ENCODE measurements at regions of chr2 and their contacts with region 1.

Region 1: GRCh38 chr2:170361090-170361936 is 183.4 kb downstream of the MYO3B start:
- DNase-seq: peak; percentile 77
- H3K4me3 Mint-ChIP-seq: no peak overlapping the region
- H3K27ac Mint-ChIP-seq: no peak overlapping the region
- H3K4me1 Mint-ChIP-seq: peaks cover 28% of the 10 kb centered on the region
- H3K27me3 Mint-ChIP-seq: peaks cover 6% of the 10 kb centered on the region

Region 2: DNA sequence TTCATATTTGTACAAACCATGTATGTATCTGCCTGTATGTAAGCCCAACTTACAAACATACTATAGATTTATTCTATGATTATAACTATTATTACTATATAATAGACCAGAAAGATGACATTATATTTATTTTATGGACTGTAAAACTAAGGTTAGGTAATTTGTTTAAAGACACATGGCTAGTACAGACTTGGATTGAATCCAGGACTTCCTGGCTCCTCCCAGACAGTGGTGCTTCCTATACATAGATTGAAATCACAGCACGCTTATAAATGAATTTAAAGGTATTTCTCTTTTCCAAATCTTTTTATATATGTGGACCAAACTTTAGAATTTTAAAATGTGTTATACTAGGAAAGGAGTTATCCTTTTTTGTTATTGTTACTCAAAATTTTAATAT is 335.0 kb before region 1 on chr2:
- CTCF ChIA-PET with region 1: no interaction called
- intact Hi-C with region 1: no loop called
- DNase-seq: no peak
- H3K4me3 Mint-ChIP-seq: no peak overlapping the region
- H3K27ac Mint-ChIP-seq: no peak overlapping the region
- H3K4me1 Mint-ChIP-seq: no peaks in the 10 kb centered on the region
- H3K27me3 Mint-ChIP-seq: no peaks in the 10 kb centered on the region

Region 3: DNA sequence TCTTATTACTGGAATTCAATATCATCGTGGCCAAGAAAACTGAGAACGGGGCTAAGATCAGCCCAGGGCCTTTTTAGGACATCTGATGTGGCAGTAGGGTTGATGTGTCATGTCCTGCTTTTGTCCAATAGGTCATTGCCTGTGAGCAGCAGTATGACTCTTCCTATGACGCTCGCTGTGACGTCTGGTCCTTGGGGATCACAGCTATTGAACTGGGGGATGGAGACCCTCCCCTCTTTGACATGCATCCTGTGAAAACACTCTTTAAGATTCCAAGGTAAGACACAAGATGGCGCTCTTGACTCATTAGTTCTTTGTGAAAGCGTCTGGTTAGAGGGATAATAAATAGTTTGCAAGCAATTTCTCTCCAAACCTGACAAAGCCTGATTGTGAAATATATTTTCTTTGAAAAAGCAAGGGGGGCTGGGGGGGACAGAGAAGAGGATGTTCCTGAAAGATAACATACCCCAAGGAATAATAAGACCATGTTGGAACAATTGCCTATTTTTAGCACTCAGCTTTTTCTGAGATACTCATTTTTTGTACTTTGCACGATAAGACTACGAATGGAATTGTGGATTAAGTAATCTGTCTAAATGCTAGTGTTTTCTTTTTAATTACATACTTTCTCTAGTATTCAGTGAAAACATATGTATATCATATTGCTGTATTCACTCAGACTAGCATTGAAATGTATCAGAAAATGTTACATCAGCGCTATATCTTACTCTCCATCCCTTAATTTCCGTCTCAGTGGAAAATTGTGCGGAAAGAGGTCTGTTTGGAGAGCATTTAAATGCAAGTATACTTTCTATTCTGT is 125.2 kb before region 1 on chr2:
- CTCF ChIA-PET with region 1: no interaction called
- intact Hi-C with region 1: loop called (anchors 1 kb)
- DNase-seq: peak; percentile 31
- H3K4me3 Mint-ChIP-seq: no peak overlapping the region
- H3K27ac Mint-ChIP-seq: no peak overlapping the region
- H3K4me1 Mint-ChIP-seq: no peaks in the 10 kb centered on the region
- H3K27me3 Mint-ChIP-seq: peaks cover 13% of the 10 kb centered on the region

Region 4: DNA sequence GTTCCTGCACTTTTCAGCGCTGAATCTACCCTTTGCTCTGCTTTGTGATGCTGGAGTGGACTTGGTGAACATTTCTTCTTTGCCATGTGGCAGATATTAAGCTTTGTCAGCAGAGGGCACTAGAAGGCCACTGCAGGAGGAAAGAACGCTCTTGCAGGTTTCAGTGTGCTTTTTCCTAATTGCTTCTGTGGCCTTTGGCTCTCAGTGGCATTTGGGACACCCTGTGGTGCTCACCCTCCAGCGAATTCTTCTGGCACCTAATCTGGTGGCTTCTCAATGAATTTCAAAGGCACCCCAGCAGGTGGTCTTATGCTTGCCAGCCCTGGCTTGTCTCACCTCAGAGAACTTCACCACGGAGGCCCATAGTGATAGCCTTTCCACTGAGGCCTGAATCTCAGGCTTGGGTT is 36.7 kb before region 1 on chr2:
- CTCF ChIA-PET with region 1: interaction called, 13 read pairs
- intact Hi-C with region 1: loop called (anchors 2 kb)
- DNase-seq: peak; percentile 53
- H3K4me3 Mint-ChIP-seq: no peak overlapping the region
- H3K27ac Mint-ChIP-seq: no peak overlapping the region
- H3K4me1 Mint-ChIP-seq: no peaks in the 10 kb centered on the region
- H3K27me3 Mint-ChIP-seq: no peaks in the 10 kb centered on the region

Region 5: DNA sequence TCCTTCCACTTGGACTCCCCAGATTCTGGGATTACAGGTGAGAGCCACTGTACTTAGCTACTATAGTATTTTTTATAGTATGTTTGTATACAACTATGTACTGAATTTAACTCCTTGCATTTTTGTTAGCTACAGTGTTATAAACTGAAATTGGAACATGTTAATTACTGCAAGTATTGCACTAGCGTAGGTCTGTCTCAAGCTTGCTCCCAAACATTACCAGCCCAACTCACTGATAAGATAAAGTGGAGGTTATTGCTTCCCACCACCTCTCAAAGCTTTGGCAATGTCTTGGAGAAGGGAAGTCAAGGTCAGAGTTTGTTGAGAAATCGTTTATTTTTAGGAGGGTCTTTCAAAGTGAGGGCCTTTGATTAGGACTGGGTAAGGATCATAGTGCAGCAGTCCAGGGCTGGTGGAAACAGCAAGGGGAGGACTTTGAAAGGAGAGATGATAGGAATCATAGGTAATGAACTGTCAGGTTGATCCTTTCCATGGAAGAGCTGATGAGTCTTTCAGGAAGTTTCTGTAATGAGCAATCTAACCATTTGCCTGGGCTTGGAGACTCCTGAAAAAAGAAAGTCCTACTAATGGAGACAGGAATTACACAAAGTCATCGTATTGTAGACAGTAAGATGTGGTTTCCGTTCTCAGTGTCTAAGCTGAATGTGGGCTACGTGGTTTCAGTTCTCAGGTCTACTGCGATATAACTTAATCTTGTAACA is 73.7 kb after region 1 on chr2:
- CTCF ChIA-PET with region 1: no interaction called
- intact Hi-C with region 1: no loop called
- DNase-seq: peak; percentile 12
- H3K4me3 Mint-ChIP-seq: no peak overlapping the region
- H3K27ac Mint-ChIP-seq: no peak overlapping the region
- H3K4me1 Mint-ChIP-seq: peaks cover 20% of the 10 kb centered on the region
- H3K27me3 Mint-ChIP-seq: peaks cover 10% of the 10 kb centered on the region

Region 6: DNA sequence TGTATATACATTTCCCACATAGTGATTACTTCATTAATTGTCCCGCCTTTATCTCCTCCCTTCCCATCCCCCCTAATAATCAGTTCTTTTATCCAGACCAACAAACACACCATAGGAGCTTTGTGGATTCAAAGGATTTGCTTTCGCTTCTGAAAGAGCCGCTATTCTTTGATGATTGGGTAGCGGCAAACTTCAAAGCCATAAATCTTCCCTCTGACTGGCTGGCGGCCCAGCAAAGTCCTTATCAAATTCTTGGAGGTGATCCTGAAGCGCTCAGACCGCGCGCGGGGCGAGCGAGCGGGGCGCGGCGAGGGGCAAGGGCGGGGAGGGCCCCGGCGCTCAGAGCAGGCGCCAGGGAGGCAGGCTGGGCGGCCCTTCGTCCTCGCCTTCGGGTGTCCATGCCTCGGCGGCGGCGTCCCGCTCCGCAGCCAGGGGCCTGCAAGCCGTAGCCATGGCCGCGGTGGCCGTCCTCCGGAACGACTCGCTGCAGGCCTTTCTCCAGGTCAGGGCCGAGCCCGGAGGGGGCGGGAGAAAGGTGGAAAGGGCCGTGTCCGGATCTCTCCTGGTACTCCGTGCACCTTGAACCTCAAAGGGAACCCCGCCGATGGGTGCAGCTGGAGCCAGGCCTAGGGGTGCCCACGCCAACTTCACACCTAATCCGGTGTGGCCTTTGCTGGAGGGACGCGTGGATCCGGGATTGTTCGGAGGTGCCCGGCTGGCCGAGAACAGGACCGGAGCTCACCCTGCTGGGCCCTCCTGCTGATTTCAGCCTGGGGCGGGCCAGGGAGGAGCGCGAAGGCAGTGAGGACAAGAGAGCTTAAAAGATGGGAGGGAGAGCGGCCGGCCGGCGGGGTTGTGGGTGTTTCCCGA is 354.0 kb after region 1 on chr2 and contains the start of gene SP5:
- CTCF ChIA-PET with region 1: interaction called, 3 read pairs
- intact Hi-C with region 1: loop called (anchors 5 kb)
- DNase-seq: no peak
- H3K4me3 Mint-ChIP-seq: peak within 1 kb of the TSS; percentile 76
- H3K27ac Mint-ChIP-seq: no peak within 1 kb of the TSS
- H3K4me1 Mint-ChIP-seq: peaks cover 33% of the 10 kb centered on the region
- H3K27me3 Mint-ChIP-seq: peaks cover 67% of the 10 kb centered on the region
- total RNA-seq, gene SP5: not detected

Region 7: DNA sequence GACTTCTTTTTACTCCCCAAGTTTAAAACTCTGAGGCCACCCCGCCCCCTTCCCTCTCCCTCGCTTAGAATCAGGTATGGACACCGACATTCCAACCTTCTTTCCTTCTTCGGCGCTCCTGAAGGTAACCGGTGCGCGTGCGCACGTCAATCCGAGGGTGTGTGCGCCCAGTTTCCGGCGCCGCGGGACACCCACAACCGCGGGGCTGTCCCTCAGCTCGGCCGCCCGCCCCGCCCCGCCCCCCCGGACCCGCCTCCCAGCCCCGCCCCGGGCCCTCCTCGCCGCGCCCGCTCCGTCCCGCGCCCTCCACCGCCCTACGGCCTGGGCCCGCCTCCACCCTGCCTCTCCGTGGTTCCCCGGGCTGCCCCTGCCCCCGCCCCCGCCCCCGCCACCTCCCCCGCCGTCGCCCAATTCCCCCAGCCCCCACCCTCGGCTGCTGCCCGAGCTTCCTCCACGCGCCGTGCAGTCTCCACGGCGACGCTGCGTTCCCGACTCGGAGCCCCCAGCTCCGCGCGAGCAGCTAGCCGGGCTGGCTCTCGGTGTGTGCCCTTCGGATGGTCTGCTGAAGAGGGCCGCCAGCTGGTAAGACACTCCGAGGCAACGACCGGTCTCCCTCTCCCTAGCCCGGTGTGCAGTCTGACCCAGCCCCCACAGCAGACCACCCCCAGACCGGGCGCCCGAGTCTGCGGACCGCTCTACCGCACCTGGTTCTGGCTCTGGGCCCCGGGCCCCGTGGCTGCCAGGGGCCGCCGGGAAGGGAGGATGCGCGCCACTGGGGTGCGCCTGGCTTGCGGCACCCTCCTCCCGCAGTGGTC is 409.5 kb after region 1 on chr2:
- CTCF ChIA-PET with region 1: interaction called, 4 read pairs
- intact Hi-C with region 1: loop called (anchors 2 kb)
- DNase-seq: peak; percentile 69
- H3K4me3 Mint-ChIP-seq: peak overlapping the region; percentile 85
- H3K27ac Mint-ChIP-seq: no peak overlapping the region
- H3K4me1 Mint-ChIP-seq: peaks cover 7% of the 10 kb centered on the region
- H3K27me3 Mint-ChIP-seq: peaks cover 9% of the 10 kb centered on the region

Measured in activated naive CD4-positive, alpha-beta T cell treated with anti-CD3 and anti-CD28 coated beads for 36 hours (primary cell).